PC-3 (cell line): ENCODE measurements at regions of chr1 and their contacts with region 1.

Region 1: GRCh38 chr1:209805875-209806760 is at the start of gene IRF6:
- DNase-seq: peak; percentile 99
- ATAC-seq: peak; percentile 84
- H3K4me3 ChIP-seq: peak within 1 kb of the TSS; percentile 81
- H3K27ac ChIP-seq: peak within 1 kb of the TSS; percentile 84
- H3K4me1 ChIP-seq: peaks cover 58% of the 10 kb centered on the region
- H3K27me3 ChIP-seq: no peaks in the 10 kb centered on the region
- CTCF ChIP-seq: no peak
- total RNA-seq, gene IRF6: 61.6 and 65.7 TPM in 2 replicates

Region 2: GRCh38 chr1:209674957-209675564 is 131.1 kb before region 1 on chr1 and contains the start of gene G0S2:
- CTCF ChIA-PET with region 1: no interaction called
- POLR2A ChIA-PET with region 1: interaction called, 13 read pairs
- intact Hi-C with region 1: no loop called
- DNase-seq: peak; percentile 96
- ATAC-seq: peak; percentile 75
- H3K4me3 ChIP-seq: peak within 1 kb of the TSS; percentile 71
- H3K27ac ChIP-seq: 0 out of 2 replicates have a peak within 1 kb of the TSS, but pooled peaks have one; percentile 0
- H3K4me1 ChIP-seq: peaks cover 55% of the 10 kb centered on the region
- H3K27me3 ChIP-seq: no peaks in the 10 kb centered on the region
- CTCF ChIP-seq: no peak
- total RNA-seq, gene G0S2: 620 and 723 TPM in 2 replicates

Region 3: GRCh38 chr1:209723756-209724693 is 82.1 kb before region 1 on chr1:
- CTCF ChIA-PET with region 1: no interaction called
- POLR2A ChIA-PET with region 1: interaction called, 18 read pairs
- intact Hi-C with region 1: no loop called
- DNase-seq: no peak
- ATAC-seq: no peak
- H3K4me3 ChIP-seq: no peak overlapping the region
- H3K27ac ChIP-seq: no peak overlapping the region
- H3K4me1 ChIP-seq: no peaks in the 10 kb centered on the region
- H3K27me3 ChIP-seq: no peaks in the 10 kb centered on the region
- CTCF ChIP-seq: no peak

Region 4: GRCh38 chr1:209761011-209761635 is 45.0 kb before region 1 on chr1:
- CTCF ChIA-PET with region 1: no interaction called
- POLR2A ChIA-PET with region 1: no interaction called
- intact Hi-C with region 1: no loop called
- DNase-seq: no peak
- ATAC-seq: no peak
- H3K4me3 ChIP-seq: no peak overlapping the region
- H3K27ac ChIP-seq: no peak overlapping the region
- H3K4me1 ChIP-seq: no peaks in the 10 kb centered on the region
- H3K27me3 ChIP-seq: no peaks in the 10 kb centered on the region
- CTCF ChIP-seq: no peak

Region 5: GRCh38 chr1:209860293-209860881 is 54.3 kb after region 1 on chr1:
- CTCF ChIA-PET with region 1: no interaction called
- POLR2A ChIA-PET with region 1: no interaction called
- intact Hi-C with region 1: no loop called
- DNase-seq: peak; percentile 94
- ATAC-seq: peak; percentile 96
- H3K4me3 ChIP-seq: no peak overlapping the region
- H3K27ac ChIP-seq: no peak overlapping the region
- H3K4me1 ChIP-seq: peaks cover 4% of the 10 kb centered on the region; the same call in 1 of the 2 replicates
- H3K27me3 ChIP-seq: no peaks in the 10 kb centered on the region
- CTCF ChIP-seq: peak; percentile 93